ENCODE measurements at regions of chr4 and their contacts with region 1.

Region 1: DNA sequence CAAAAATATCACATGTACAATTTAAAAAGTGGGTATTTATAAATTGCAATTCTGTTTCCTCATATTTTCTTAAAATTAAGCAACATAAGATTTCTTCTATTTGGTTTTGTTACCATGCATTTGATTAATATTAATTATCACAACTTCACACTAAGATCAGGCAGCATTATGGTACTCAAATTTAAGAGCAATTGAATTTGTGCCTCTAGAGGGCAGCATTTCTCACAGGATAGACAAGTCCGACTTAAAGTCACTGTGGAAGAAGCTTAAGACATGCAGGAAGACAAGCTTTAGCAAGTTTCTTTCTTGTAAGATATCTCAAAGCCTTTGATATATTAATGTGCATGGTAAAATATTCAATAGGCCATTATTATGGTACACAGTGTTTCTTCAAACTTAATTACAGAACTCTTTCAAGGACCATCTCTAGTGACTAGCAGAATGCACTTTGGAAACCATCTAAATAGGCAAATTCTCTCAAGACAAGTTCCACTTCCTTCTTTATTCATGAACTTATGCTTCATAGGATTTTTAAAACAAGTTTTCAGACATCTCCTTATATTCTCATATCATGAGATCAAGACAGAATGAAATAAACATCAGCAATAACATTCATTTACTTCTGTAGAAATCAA is 35.0 kb downstream of the FBXW7 start:
- DNase-seq: peak in 1 of 2 donors; percentile 67
- H3K4me3 ChIP-seq: no peak overlapping the region
- H3K27ac ChIP-seq: no peak overlapping the region
- H3K4me1 ChIP-seq: no peaks in the 10 kb centered on the region
- H3K27me3 ChIP-seq: no peaks in the 10 kb centered on the region
- CTCF ChIP-seq: peak; percentile 26 to 77 (median 72)

Region 2: GRCh38 chr4:151658959-151659600 is 841.8 kb before region 1 on chr4:
- intact Hi-C with region 1: no loop called
- DNase-seq: no peak
- H3K4me3 ChIP-seq: no peak overlapping the region
- H3K27ac ChIP-seq: peak overlapping the region in 1 of 2 donors; percentile 12
- H3K4me1 ChIP-seq: no peaks in the 10 kb centered on the region
- H3K27me3 ChIP-seq: no peaks in the 10 kb centered on the region
- CTCF ChIP-seq: no peak

Region 3: GRCh38 chr4:152014280-152014679 is 486.6 kb before region 1 on chr4:
- intact Hi-C with region 1: no loop called
- DNase-seq: no peak
- H3K4me3 ChIP-seq: no peak overlapping the region
- H3K27ac ChIP-seq: no peak overlapping the region
- H3K4me1 ChIP-seq: no peaks in the 10 kb centered on the region
- H3K27me3 ChIP-seq: no peaks in the 10 kb centered on the region
- CTCF ChIP-seq: no peak

Region 4: GRCh38 chr4:152640058-152640833 is 139.3 kb after region 1 on chr4:
- intact Hi-C with region 1: loop called (anchors 2 kb)
- DNase-seq: no peak
- H3K4me3 ChIP-seq: no peak overlapping the region
- H3K27ac ChIP-seq: no peak overlapping the region
- H3K4me1 ChIP-seq: no peaks in the 10 kb centered on the region
- H3K27me3 ChIP-seq: no peaks in the 10 kb centered on the region
- CTCF ChIP-seq: peak; percentile 29 to 67 (median 44)

Region 5: GRCh38 chr4:152735396-152735859 is 234.5 kb after region 1 on chr4:
- intact Hi-C with region 1: loop called (anchors 10 kb)
- DNase-seq: no peak
- H3K4me3 ChIP-seq: no peak overlapping the region
- H3K27ac ChIP-seq: no peak overlapping the region
- H3K4me1 ChIP-seq: no peaks in the 10 kb centered on the region
- H3K27me3 ChIP-seq: no peaks in the 10 kb centered on the region
- CTCF ChIP-seq: peak in 1 of 3 experiments; percentile 40